ENCODE measurements at regions of chr11 and their contacts with region 1.

Region 1: GRCh38 chr11:77776455-77776854 is 44.1 kb downstream of the RSF1 start:
- DNase-seq: no peak
- H3K4me3 Mint-ChIP-seq: no peak overlapping the region
- H3K27ac Mint-ChIP-seq: no peak overlapping the region
- H3K4me1 Mint-ChIP-seq: peaks cover 7% of the 10 kb centered on the region
- H3K27me3 Mint-ChIP-seq: no peaks in the 10 kb centered on the region

Region 2: DNA sequence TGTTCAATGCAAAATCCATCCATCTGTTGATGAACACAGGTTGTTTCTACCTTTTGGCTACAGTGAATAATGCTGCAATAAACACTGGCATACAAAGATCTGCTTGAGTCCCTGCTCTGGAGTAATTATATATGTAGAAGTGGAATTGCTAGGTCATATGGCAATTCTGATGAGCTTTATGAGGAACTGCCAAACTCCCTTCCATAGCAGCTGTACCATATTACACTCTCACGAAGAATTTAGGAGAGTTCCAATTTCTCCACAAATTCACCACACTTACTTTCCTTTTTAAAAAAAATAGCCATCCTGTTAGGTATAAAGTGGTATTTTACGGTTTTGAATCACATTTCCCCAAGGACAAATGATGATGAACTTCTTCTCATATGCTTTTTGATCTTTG is 18.1 kb before region 1 on chr11:
- intact Hi-C with region 1: no loop called
- DNase-seq: no peak
- H3K4me3 Mint-ChIP-seq: no peak overlapping the region
- H3K27ac Mint-ChIP-seq: no peak overlapping the region
- H3K4me1 Mint-ChIP-seq: peaks cover 5% of the 10 kb centered on the region
- H3K27me3 Mint-ChIP-seq: no peaks in the 10 kb centered on the region

Region 3: DNA sequence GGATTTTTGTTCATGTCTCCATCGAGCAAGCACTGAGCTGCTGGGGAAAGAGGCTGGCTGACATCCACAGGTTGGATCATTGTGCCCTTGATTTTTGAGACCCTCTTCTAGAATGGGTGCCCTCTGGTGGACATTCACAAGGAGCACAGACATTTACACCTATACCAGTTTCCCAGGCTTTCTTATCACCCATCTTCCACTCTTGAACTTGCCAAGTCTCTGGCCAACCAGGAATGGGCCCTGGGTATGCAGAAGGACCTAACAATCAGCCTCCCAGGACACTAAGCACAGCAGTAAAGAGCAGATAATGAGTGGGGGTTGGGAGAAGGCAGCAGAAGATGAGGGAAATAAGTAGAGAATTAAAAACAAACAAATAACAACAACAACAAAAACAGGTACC is 223.7 kb after region 1 on chr11:
- intact Hi-C with region 1: loop called (anchors 1 kb)
- DNase-seq: peak; percentile 25
- H3K4me3 Mint-ChIP-seq: no peak overlapping the region
- H3K27ac Mint-ChIP-seq: no peak overlapping the region
- H3K4me1 Mint-ChIP-seq: peaks cover 12% of the 10 kb centered on the region
- H3K27me3 Mint-ChIP-seq: peaks cover 14% of the 10 kb centered on the region

Region 4: DNA sequence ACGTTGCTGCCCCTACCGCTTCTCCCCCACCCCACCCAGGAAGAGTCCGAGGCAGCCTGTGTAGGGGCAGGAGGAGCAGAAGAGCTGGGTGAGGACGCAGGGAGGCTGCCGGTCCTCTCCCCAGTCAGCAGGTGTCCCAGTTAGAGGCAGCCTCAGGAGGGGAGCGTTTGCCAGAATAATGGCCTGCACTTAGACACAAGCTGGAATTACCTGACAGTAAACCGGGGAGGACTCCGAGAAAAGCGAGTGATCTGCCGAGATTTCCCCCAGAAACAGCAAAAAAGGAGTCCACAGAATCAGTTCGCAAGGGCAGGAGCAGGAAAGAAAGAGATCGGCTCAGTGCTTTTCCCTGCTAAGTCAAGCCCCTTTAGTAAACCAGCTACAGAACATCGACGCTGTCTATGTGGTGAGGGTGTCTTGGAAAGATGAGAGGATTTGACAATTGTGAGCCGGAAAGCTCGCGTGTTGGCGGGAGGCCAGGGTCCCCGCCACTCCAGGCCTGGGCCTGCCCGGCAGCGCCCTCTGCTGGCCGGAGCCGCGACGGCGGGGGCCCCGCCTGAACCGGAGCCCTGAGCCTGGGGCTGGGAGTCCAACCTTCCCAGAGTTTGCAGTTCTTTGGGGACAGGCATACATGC is 269.5 kb after region 1 on chr11:
- intact Hi-C with region 1: loop called (anchors 2 kb)
- DNase-seq: peak; percentile 68
- H3K4me3 Mint-ChIP-seq: no peak overlapping the region
- H3K27ac Mint-ChIP-seq: no peak overlapping the region
- H3K4me1 Mint-ChIP-seq: peaks cover 13% of the 10 kb centered on the region
- H3K27me3 Mint-ChIP-seq: no peaks in the 10 kb centered on the region

Measured in activated T-helper 1 cell treated with anti-CD3 and anti-CD28 coated beads, Interleukin-12 subunit alpha, Interleukin-12 subunit beta, Interleukin-2, Interleukin-4 antibody, amounts not matched to agents 30 ng/mL and 10 ng/mL and 1 ng/mL, durations not matched to agents 14 hours and 24 hours and 36 hours (primary cell).